ENCODE measurements at regions of chr10 and their contacts with region 1.

Region 1: DNA sequence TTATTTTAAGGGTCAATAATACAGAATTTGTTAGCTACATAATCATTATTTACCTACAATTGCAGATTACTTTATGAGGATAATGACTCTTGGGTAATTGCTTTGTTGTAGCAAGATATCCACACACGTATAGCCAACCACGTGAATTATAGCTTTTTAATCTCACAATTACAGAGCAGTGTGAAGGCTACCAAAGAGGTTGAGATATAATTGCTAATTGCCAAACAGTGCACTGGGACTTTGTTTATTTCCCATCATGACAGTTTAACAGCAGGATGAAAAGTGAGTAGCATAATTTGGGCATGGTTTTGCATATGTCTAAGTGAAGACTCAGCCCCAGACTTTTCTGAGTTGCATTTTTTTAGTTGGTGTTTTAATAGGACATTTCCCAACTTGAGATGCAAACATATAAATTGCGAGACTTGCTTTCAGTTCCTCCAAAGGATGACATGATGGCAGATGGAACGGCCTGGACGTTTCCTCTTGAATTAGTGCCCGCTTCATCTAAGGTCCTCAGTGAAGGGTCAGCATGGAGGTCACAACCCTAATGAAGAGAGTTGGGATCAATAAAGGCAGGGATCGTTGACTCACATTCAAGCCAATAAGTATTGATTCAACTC is 180.7 kb upstream of the GPR26 start:
- H3K4me3 Mint-ChIP-seq: no peak overlapping the region
- H3K27ac Mint-ChIP-seq: no peak overlapping the region
- H3K4me1 Mint-ChIP-seq: peaks cover 34% of the 10 kb centered on the region
- H3K27me3 Mint-ChIP-seq: peaks cover 2% of the 10 kb centered on the region

Region 2: GRCh38 chr10:123147635-123148413 is 337.6 kb before region 1 on chr10 and contains the start of gene HMX2:
- intact Hi-C with region 1: loop called (anchors 10 kb)
- H3K4me3 Mint-ChIP-seq: peak within 1 kb of the TSS; percentile 34
- H3K27ac Mint-ChIP-seq: no peak within 1 kb of the TSS
- H3K4me1 Mint-ChIP-seq: peaks cover 44% of the 10 kb centered on the region
- H3K27me3 Mint-ChIP-seq: peaks cover 94% of the 10 kb centered on the region

Measured in dendritic cell treated with granulocyte-macrophage colony-stimulating factor and Interleukin-4, amounts not matched to agents 40 ng/mL and 50 ng/mL, for 4 days (primary cell).